Sigmoid colon (tissue), 7 donors: ENCODE measurements at regions of chr18 and their contacts with region 1.

Region 1: DNA sequence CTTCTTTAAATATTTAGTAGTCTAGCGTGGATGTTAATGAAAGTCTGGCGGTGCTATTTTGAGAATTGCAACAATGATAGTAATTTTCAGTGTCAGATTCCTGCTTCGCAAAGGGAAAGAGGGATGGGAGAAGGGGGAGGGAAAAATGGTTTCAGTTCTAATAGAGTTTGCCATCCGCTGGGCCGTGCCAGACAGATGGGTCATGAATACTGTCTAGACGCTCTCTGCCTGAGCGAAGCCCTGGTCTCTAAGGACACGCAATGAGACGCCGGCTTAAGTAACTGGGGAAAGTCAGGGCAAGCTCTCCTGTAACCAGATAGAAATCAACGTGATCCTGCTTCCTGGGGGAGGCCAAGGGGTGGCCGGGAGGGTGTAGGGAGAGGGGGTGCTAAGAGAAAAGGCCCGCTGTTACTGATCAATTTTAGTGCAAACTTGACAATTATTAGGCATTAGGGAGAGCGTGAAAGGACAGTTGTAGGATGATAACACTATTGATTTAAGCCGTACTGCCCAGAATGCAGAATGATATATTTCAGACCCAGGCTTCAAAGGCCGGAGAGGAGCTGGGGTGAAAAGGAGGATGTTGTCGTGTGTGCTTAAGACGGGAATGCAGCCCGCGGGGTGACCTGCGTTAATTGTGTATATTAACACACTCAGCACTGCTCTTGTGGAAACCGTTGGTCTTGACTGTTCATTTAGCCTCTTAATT is 229.2 kb downstream of the LDLRAD4 start:
- DNase-seq: no peak
- H3K4me3 ChIP-seq: peak overlapping the region in 3 of 4 donors; percentile 23 to 30 (median 24)
- H3K27ac ChIP-seq: peak overlapping the region; percentile 10 to 74 (median 40)
- H3K4me1 ChIP-seq: peaks cover 0 to 51% (median 35%) of the 10 kb centered on the region in 4 donors
- H3K27me3 ChIP-seq: no peaks in the 10 kb centered on the region
- CTCF ChIP-seq: no peak
- EP300 ChIP-seq: no peak
- POLR2A ChIP-seq: no peak

Region 2: DNA sequence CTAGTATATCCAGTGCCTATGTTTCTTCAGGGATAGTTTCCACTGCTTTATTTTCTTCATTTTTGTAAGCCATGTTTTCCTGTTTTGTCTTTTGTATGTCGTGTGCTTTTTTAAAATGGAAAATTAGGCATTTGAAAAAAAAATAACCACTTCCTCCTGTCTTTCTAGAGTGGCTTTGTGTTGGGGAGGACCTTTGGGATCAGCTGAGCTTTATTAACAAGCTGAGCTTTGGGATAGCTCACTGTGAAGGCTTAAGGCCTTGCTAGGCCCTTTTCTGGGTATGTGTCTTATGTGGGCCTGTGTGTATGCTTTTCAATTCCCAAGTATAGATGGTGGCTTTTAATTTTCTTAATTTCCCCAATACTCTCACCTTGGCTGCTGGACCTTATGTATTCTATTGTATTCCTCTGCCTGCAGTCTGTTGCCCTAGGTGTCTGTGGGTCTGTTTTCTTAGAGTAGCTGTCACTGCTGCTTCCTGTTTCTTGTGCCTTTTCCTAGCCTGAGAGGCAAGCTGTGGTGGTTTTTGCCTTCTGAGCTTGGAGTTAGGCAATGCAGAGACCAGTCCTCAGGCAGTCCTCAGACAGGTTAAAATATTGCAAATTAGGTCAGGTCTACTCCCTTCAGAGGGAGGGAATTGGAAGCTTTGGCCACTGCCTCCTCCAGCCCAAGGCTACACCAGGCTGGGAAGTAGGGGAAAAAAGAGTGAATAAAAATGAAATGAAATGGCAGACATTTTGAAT is 94.5 kb before region 1 on chr18:
- intact Hi-C with region 1: no loop called
- DNase-seq: no peak
- H3K4me3 ChIP-seq: no peak overlapping the region
- H3K27ac ChIP-seq: no peak overlapping the region
- H3K4me1 ChIP-seq: no peaks in the 10 kb centered on the region
- H3K27me3 ChIP-seq: no peaks in the 10 kb centered on the region
- CTCF ChIP-seq: no peak
- EP300 ChIP-seq: no peak
- POLR2A ChIP-seq: no peak

Region 3: GRCh38 chr18:13539050-13539449 is 91.3 kb after region 1 on chr18:
- intact Hi-C with region 1: loop called (anchors 5 kb)
- DNase-seq: no peak
- H3K4me3 ChIP-seq: no peak overlapping the region
- H3K27ac ChIP-seq: peak overlapping the region; percentile 25 to 83 (median 38)
- H3K4me1 ChIP-seq: peaks cover 0 to 70% (median 59%) of the 10 kb centered on the region in 4 donors
- H3K27me3 ChIP-seq: no peaks in the 10 kb centered on the region
- CTCF ChIP-seq: no peak
- EP300 ChIP-seq: peak in 2 of 4 donors; percentile 59 to 68
- POLR2A ChIP-seq: no peak